OCI-LY7 (cell line): ENCODE measurements at regions of chr6 and their contacts with region 1.

Region 1: GRCh38 chr6:96420294-96420693 is 101.3 kb upstream of the UFL1 start:
- DNase-seq: no peak
- H3K4me3 ChIP-seq: no peak overlapping the region
- H3K27ac ChIP-seq: no peak overlapping the region
- H3K4me1 ChIP-seq: no peaks in the 10 kb centered on the region
- CTCF ChIP-seq: no peak

Region 2: DNA sequence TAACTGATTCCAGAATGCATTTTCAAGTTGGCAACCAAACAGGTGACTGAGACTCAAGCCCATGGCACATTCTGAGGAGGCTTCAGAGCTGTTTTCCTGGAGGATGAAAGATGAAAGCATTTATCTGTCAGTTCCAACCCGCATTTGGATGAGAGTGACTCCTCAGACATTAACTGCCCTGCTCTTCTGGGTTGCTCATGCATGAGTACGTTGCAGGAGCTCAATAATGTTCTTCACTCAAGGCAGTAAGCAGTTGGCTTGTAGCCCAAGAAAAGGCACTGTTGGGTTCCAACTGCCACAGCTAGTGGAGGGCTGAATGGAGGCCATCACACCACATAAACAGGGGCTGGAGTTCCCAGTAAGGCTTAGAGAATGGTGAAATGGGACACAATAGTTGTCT is 249.2 kb before region 1 on chr6:
- CTCF ChIA-PET with region 1: no interaction called
- POLR2A ChIA-PET with region 1: no interaction called
- intact Hi-C with region 1: loop called (anchors 5 kb)
- DNase-seq: no peak
- H3K4me3 ChIP-seq: no peak overlapping the region
- H3K27ac ChIP-seq: no peak overlapping the region
- H3K4me1 ChIP-seq: no peaks in the 10 kb centered on the region
- CTCF ChIP-seq: no peak

Region 3: DNA sequence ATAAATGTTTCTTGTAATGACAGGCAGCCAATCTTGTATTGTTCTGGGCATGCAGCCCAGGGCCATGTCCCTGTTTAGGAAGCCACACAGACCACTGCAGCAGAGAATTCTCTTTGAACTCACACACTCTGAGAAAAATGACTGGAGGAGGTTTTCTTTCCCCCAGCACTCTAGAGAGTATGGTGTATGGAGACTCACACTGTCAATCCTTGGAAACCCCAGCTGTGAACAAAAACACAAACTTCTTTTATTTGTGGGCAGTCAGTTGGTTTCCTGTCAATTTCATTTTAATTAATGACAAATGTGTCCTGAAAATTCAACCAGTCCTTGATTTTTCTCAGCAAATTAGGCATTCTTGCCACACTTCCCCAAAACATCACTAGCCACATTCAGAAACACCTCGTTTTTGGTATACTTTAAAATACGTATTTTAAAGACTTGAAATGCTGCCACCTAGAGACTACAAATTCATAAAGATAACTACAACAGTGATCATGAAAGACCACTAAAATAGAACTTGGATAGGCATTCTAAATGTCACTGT is 48.5 kb after region 1 on chr6:
- CTCF ChIA-PET with region 1: no interaction called
- POLR2A ChIA-PET with region 1: no interaction called
- intact Hi-C with region 1: no loop called
- DNase-seq: peak; percentile 14
- H3K4me3 ChIP-seq: no peak overlapping the region
- H3K27ac ChIP-seq: no peak overlapping the region
- H3K4me1 ChIP-seq: no peaks in the 10 kb centered on the region
- CTCF ChIP-seq: peak; percentile 75